SK-N-SH (cell line): ENCODE measurements at regions of chr15 and their contacts with region 1.

Region 1: GRCh38 chr15:59278120-59278519 is 71.5 kb downstream of the LDHAL6B start:
- DNase-seq: no peak
- H3K4me3 ChIP-seq: no peak overlapping the region
- H3K27ac ChIP-seq: peak overlapping the region in 1 of 2 experiments; percentile 35; a peak in 1 of 4 replicates
- H3K4me1 ChIP-seq: peaks cover 0 to 5% of the 10 kb centered on the region in 2 experiments; a peak in 2 of 4 replicates
- H3K27me3 ChIP-seq: no peaks in the 10 kb centered on the region
- CTCF ChIP-seq: no peak
- EP300 ChIP-seq: no peak
- RAD21 ChIP-seq: no peak

Region 2: GRCh38 chr15:59260090-59260489 is 18.0 kb before region 1 on chr15:
- CTCF ChIA-PET with region 1: interaction called, 10 read pairs
- POLR2A ChIA-PET with region 1: no interaction called
- DNase-seq: no peak
- H3K4me3 ChIP-seq: no peak overlapping the region
- H3K27ac ChIP-seq: no peak overlapping the region
- H3K4me1 ChIP-seq: no peaks in the 10 kb centered on the region
- H3K27me3 ChIP-seq: no peaks in the 10 kb centered on the region
- CTCF ChIP-seq: no peak
- EP300 ChIP-seq: no peak
- RAD21 ChIP-seq: no peak